ENCODE measurements at regions of chr7 and their contacts with region 1.

Region 1: DNA sequence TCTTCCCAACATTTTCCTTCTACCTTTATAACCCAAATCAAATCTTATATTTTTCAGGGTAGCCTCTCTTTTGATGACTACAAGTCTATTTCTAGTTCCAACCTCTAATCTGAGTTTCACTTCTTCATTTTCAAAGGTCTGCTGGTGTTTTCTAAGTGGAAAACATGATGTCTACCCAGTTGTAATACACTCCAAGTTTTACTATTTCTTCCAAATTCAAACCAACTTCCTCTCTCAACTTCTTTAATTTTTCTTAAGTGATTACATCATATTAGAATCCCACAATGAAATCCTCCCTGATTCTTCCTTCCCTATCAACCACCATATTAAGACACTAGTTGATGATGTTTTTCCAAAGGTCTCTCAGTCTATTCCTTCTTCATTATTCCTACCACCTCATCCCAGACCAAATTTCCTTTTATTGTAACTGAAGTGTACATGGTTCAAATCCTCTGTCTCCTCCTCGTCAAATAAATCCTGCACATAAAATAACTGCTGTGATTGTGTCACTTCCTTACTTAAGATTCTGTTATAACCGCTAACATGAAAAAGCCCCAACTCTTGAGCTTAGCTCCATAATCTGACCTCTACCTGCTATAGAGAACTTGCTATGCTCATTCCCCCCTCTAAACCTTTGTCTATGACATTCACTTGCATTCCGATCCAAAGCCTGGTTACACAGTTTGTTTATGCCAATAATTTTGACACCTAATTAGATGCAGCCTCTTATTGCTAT is 12.7 kb downstream of the TAS2R38 start:
- H3K4me3 Mint-ChIP-seq: peak overlapping the region; percentile 2
- H3K27ac Mint-ChIP-seq: peak overlapping the region; percentile 75
- H3K4me1 Mint-ChIP-seq: peaks cover 19% of the 10 kb centered on the region
- H3K27me3 Mint-ChIP-seq: no peaks in the 10 kb centered on the region

Region 2: DNA sequence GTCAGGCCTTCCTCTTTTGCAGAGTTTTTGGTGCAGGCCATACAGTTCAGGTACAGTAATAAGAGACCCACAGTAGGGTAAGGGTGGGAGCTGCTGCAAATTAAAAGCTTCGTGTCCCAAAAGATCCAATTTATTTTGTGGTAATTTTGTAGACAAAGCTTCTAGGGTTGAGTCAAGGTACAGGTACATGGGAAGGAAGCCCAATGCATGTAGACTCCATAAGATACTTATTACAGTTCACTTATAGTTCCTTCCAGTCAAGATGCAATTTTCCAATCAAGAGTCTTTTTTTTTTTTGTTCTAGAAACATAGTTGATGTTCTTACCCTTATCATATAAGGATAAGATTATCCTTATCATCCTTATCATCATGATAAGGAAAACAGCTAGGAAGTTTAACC is 184.5 kb before region 1 on chr7 and contains the start of gene TAS2R4:
- intact Hi-C with region 1: no loop called
- H3K4me3 Mint-ChIP-seq: no peak within 1 kb of the TSS
- H3K27ac Mint-ChIP-seq: no peak within 1 kb of the TSS
- H3K4me1 Mint-ChIP-seq: no peaks in the 10 kb centered on the region
- H3K27me3 Mint-ChIP-seq: no peaks in the 10 kb centered on the region

Region 3: GRCh38 chr7:141945356-141945755 is 15.5 kb before region 1 on chr7:
- intact Hi-C with region 1: loop called (anchors 1 kb)
- H3K4me3 Mint-ChIP-seq: no peak overlapping the region
- H3K27ac Mint-ChIP-seq: peak overlapping the region; percentile 30
- H3K4me1 Mint-ChIP-seq: peaks cover 52% of the 10 kb centered on the region
- H3K27me3 Mint-ChIP-seq: peaks cover 1% of the 10 kb centered on the region

Measured in dendritic cell treated with granulocyte-macrophage colony-stimulating factor and Interleukin-4, amounts not matched to agents 40 ng/mL and 50 ng/mL, for 4 days (primary cell).